ENCODE measurements at regions of chr9 and their contacts with region 1.

Region 1: DNA sequence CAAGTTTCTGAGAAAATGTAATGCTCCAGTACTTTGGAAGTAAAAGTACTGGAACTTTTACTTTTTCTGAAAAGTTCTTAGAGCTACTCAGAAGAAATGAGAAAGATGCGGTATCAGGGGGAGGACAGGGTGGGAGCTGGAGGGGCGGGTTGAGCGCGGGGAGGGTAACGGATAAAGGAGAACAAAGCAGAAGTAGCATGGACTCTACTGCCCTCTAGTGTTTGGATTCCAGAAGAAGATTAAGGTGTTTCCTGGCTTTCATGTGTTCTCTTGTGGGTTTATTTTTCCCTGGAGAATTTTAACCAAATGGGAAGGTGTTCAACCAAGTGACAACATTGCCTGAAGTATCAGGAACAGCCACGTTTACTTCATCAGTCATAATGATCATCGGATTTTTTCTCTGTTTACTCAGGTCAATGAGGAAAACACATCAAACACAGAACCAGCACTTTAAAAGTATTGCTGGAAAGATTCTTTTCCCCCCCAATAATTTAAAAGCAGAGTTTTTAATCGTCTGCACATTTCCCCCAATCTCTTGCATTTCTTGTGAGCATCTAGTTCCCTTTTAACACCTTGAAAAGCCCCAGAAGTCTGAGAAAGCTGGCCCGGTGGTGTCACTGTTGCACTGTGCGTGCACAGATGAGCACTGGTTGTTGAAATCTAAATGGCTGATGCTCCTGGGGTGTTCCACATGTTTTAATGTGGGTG is 190.6 kb downstream of the MPDZ start:
- DNase-seq: peak; percentile 76
- H3K4me3 ChIP-seq: no peak overlapping the region
- H3K27ac ChIP-seq: no peak overlapping the region
- H3K4me1 ChIP-seq: no peaks in the 10 kb centered on the region
- H3K27me3 ChIP-seq: no peaks in the 10 kb centered on the region
- CTCF ChIP-seq: peak; percentile 73

Region 2: GRCh38 chr9:12719431-12719830 is 369.4 kb before region 1 on chr9:
- CTCF ChIA-PET with region 1: interaction called, 4 read pairs
- POLR2A ChIA-PET with region 1: no interaction called
- intact Hi-C with region 1: loop called (anchors 2 kb)
- DNase-seq: peak; percentile 51
- H3K4me3 ChIP-seq: no peak overlapping the region
- H3K27ac ChIP-seq: no peak overlapping the region
- H3K4me1 ChIP-seq: no peaks in the 10 kb centered on the region
- H3K27me3 ChIP-seq: no peaks in the 10 kb centered on the region
- CTCF ChIP-seq: peak; percentile 70

Region 3: GRCh38 chr9:12884737-12885414 is 204.0 kb before region 1 on chr9:
- CTCF ChIA-PET with region 1: no interaction called
- POLR2A ChIA-PET with region 1: no interaction called
- intact Hi-C with region 1: loop called (anchors 10 kb)
- DNase-seq: peak; percentile 71
- H3K4me3 ChIP-seq: no peak overlapping the region
- H3K27ac ChIP-seq: no peak overlapping the region
- H3K4me1 ChIP-seq: peaks cover 21% of the 10 kb centered on the region
- H3K27me3 ChIP-seq: no peaks in the 10 kb centered on the region
- CTCF ChIP-seq: peak; percentile 71

Region 4: GRCh38 chr9:13688994-13689600 is 600.2 kb after region 1 on chr9:
- CTCF ChIA-PET with region 1: no interaction called
- POLR2A ChIA-PET with region 1: no interaction called
- intact Hi-C with region 1: loop called (anchors 5 kb)
- DNase-seq: peak; percentile 43
- H3K4me3 ChIP-seq: no peak overlapping the region
- H3K27ac ChIP-seq: no peak overlapping the region
- H3K4me1 ChIP-seq: no peaks in the 10 kb centered on the region
- H3K27me3 ChIP-seq: no peaks in the 10 kb centered on the region
- CTCF ChIP-seq: peak; percentile 60